OCI-LY7 (cell line): ENCODE measurements at regions of chr6 and their contacts with region 1.

Region 1: DNA sequence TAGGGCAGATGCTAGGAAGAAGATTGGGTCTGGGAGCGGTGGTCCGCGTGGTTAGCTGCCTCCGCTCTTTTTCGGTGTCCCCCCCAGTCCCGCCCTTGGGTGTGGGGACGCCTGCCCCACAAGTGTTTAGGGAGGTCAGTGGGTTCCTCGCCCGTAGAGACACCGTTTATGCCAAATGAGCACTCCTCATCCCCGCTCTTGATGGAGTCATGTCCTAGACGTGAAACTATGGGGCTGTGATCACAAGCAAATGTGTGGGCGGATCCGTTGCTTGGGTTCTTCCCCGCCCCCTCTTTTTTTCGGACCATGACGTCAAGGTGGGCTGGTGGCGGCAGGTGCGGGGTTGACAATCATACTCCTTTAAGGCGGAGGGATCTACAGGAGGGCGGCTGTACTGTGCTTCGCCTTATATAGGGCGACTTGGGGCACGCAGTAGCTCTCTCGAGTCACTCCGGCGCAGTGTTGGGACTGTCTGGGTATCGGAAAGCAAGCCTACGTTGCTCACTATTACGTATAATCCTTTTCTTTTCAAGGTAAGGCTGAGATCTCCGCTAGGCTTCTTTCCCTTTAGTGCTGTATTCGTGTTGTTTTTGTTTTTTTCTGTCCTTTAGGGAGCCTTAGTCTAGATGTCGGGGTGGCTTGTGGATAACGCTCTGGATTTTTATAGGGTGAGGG is at the start of gene HSP90AB1:
- DNase-seq: peak; percentile 99
- H3K4me3 ChIP-seq: peak within 1 kb of the TSS; percentile 93
- H3K27ac ChIP-seq: peak within 1 kb of the TSS; percentile 81
- H3K4me1 ChIP-seq: peaks cover 45% of the 10 kb centered on the region
- CTCF ChIP-seq: no peak
- total RNA-seq, gene HSP90AB1: 911 and 1,004 TPM in 2 replicates

Region 2: GRCh38 chr6:44126320-44127149 is 120.3 kb before region 1 on chr6:
- CTCF ChIA-PET with region 1: no interaction called
- POLR2A ChIA-PET with region 1: no interaction called
- intact Hi-C with region 1: loop called (anchors 1 kb)
- DNase-seq: peak; percentile 53
- H3K4me3 ChIP-seq: peak overlapping the region; percentile 95
- H3K27ac ChIP-seq: peak overlapping the region; percentile 40
- H3K4me1 ChIP-seq: peaks cover 47% of the 10 kb centered on the region
- CTCF ChIP-seq: no peak

Region 3: DNA sequence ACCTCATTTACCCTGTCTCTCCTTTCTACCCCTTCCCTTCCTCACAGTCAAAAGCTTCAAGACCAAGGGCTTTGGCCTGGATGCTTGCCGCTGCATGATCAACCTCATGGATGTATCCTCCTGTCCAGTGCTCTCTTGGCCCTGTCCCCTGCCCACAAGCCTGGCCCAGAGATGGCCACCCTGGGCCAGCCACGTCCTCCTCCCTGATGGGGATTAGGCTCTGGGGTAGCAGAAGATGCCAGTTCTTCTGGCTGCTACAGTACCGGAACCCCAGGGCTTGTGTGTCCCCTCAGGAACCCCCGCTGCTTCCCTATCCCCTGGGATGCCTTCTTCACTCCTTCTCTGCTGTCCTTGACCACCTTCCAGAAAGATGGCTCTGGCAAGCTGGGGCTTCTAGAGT is 65.9 kb before region 1 on chr6:
- CTCF ChIA-PET with region 1: interaction called, 11 read pairs
- POLR2A ChIA-PET with region 1: interaction called, 3 read pairs
- intact Hi-C with region 1: no loop called
- DNase-seq: no peak
- H3K4me3 ChIP-seq: no peak overlapping the region
- H3K27ac ChIP-seq: no peak overlapping the region
- H3K4me1 ChIP-seq: peaks cover 6% of the 10 kb centered on the region
- CTCF ChIP-seq: no peak

Region 4: GRCh38 chr6:44221291-44221960 is 25.4 kb before region 1 on chr6:
- CTCF ChIA-PET with region 1: interaction called, 4 read pairs
- POLR2A ChIA-PET with region 1: interaction called, 10 read pairs
- intact Hi-C with region 1: loop called (anchors 2 kb)
- DNase-seq: peak; percentile 85
- H3K4me3 ChIP-seq: no peak overlapping the region
- H3K27ac ChIP-seq: peak overlapping the region; percentile 56
- H3K4me1 ChIP-seq: peaks cover 82% of the 10 kb centered on the region
- CTCF ChIP-seq: peak; percentile 81

Region 5: GRCh38 chr6:44257025-44257752 is 10.4 kb after region 1 on chr6 and contains the start of gene SLC35B2:
- CTCF ChIA-PET with region 1: interaction called, 3 read pairs
- POLR2A ChIA-PET with region 1: interaction called, 22 read pairs
- intact Hi-C with region 1: no loop called
- DNase-seq: peak; percentile 84
- H3K4me3 ChIP-seq: peak within 1 kb of the TSS; percentile 91
- H3K27ac ChIP-seq: peak within 1 kb of the TSS; percentile 64
- H3K4me1 ChIP-seq: peaks cover 73% of the 10 kb centered on the region
- CTCF ChIP-seq: peak; percentile 75
- total RNA-seq, gene SLC35B2: 10.1 and 13.9 TPM in 2 replicates